ENCODE measurements at regions of chr4 and their contacts with region 1.

Region 1: GRCh38 chr4:10164877-10165283 is 48.3 kb upstream of the WDR1 start:
- DNase-seq: no peak
- H3K4me3 ChIP-seq: no peak overlapping the region
- H3K27ac ChIP-seq: no peak overlapping the region
- H3K4me1 ChIP-seq: no peaks in the 10 kb centered on the region
- H3K27me3 ChIP-seq: no peaks in the 10 kb centered on the region
- CTCF ChIP-seq: peak; percentile 17 to 60 (median 44)
- POLR2A ChIP-seq: no peak

Region 2: DNA sequence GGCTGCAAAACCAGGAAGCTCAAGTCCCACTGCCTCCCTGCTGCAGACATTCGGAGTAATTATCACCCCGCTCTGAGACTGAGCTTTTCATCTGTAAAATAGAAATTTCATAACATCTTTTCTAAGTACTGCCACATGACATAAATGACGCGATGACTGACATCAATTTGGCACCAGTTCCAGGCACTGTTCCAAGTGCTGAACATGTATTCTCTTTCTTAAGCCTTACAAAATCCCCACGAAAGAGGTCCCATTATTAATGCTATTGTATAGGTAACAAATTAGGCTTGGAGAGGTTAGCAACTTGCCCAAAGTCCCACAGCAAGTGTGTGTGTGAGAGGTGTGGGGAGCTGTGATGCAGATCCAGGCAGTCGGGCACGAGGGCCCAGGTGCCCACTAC is 200.0 kb before region 1 on chr4:
- intact Hi-C with region 1: no loop called
- DNase-seq: no peak
- H3K4me3 ChIP-seq: no peak overlapping the region
- H3K27ac ChIP-seq: no peak overlapping the region
- H3K4me1 ChIP-seq: peaks cover 0 to 4% (median 3%) of the 10 kb centered on the region in 3 donors
- H3K27me3 ChIP-seq: no peaks in the 10 kb centered on the region
- CTCF ChIP-seq: no peak
- POLR2A ChIP-seq: no peak

Region 3: GRCh38 chr4:10212400-10212799 is 47.5 kb after region 1 on chr4:
- intact Hi-C with region 1: no loop called
- DNase-seq: no peak
- H3K4me3 ChIP-seq: no peak overlapping the region
- H3K27ac ChIP-seq: no peak overlapping the region
- H3K4me1 ChIP-seq: no peaks in the 10 kb centered on the region
- H3K27me3 ChIP-seq: no peaks in the 10 kb centered on the region
- CTCF ChIP-seq: no peak
- POLR2A ChIP-seq: no peak

Region 4: GRCh38 chr4:10403633-10404445 is 239.0 kb after region 1 on chr4:
- intact Hi-C with region 1: loop called (anchors 5 kb)
- DNase-seq: no peak
- H3K4me3 ChIP-seq: no peak overlapping the region
- H3K27ac ChIP-seq: no peak overlapping the region
- H3K4me1 ChIP-seq: no peaks in the 10 kb centered on the region
- H3K27me3 ChIP-seq: no peaks in the 10 kb centered on the region
- CTCF ChIP-seq: peak in 5 of 6 experiments; percentile 40 to 59 (median 41)
- POLR2A ChIP-seq: no peak

Region 5: DNA sequence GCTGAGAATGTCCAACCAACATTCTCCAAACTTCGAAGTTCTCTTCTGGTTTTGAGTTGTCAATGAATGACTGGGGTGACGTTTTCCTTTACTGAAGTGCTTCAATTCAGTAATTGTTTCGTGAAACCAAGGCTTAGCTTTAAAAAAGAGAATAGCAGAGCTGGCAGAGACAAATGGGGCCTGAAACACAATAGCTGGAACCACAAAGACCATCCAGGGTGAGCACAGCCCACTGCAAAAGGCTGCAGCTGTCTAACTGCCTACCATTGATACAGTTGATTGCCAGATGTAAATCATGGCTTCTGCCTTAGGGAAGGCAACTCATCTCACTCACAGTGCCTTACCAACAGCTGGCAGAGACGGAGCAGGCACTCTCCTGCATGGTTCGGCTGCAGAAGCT is 371.0 kb after region 1 on chr4:
- intact Hi-C with region 1: no loop called
- DNase-seq: no peak
- H3K4me3 ChIP-seq: no peak overlapping the region
- H3K27ac ChIP-seq: no peak overlapping the region
- H3K4me1 ChIP-seq: no peaks in the 10 kb centered on the region
- H3K27me3 ChIP-seq: peaks cover 0 to 8% (median 0%) of the 10 kb centered on the region in 4 donors
- CTCF ChIP-seq: no peak
- POLR2A ChIP-seq: no peak